ENCODE measurements at regions of chr5 and their contacts with region 1.

Region 1: DNA sequence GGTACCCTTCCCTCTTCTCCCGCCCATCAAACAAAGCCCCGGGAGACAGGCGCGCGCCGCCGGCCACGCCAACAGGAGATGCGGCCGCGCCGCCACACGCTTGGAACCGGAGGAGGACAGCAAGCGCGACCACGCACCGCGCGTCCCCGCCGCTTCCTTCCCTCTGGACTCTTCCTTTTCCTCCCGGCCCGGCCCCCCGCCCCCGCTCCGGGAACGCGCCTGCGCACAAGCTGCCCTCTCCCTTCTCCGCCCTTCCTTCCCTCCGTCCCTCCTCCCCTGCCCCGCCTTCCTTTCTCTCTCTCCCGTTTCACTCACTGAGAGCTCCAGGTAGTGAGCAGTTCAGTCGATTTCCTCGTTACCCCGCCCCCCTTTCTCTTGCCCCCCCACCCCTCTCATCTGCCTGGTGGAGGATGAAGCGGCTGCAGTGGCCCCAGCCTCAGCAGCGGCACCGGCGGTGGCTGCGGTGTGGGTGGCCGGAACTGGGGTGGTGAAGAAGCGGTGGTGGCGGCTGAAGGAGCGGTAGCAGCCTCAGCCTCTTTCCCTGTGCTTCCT is at the start of gene RASA1:
- DNase-seq: peak; percentile 87
- ATAC-seq: peak; percentile 90
- H3K4me3 ChIP-seq: peak within 1 kb of the TSS; percentile 90
- H3K27ac ChIP-seq: peak within 1 kb of the TSS; percentile 98
- H3K4me1 ChIP-seq: no peaks in the 10 kb centered on the region; the same call in 1 of the 2 replicates
- H3K27me3 ChIP-seq: no peaks in the 10 kb centered on the region
- CTCF ChIP-seq: no peak
- POLR2A ChIP-seq: peak; percentile 80
- RAD21 ChIP-seq: no peak
- total RNA-seq, gene RASA1: 45.7 and 55.8 TPM in 2 replicates

Region 2: DNA sequence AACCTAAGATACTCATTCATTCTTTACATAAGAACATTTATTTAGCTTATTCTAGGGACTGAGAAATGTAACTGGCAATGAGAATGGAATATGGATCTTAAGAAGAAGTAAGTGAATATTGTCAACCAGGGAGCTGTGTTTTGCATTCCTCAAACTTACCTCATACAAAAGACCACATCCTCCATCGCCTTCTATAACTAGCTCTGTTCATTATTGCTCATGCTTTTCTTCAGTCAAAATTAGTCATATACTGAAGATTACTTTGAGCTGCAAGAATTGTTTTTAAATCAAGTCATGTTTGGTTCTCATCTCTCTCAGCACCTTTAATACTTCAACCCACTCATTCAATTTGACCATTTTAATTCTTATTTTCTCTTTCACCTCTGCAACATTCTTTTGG is 140.2 kb before region 1 on chr5:
- CTCF ChIA-PET with region 1: no interaction called
- POLR2A ChIA-PET with region 1: no interaction called
- dilution Hi-C with region 1: no loop called
- in situ Hi-C with region 1: no loop called
- intact Hi-C with region 1: loop called (anchors 5 kb)
- DNase-seq: peak; percentile 89
- ATAC-seq: peak; percentile 80
- H3K4me3 ChIP-seq: no peak overlapping the region
- H3K27ac ChIP-seq: peak overlapping the region; percentile 39; the same call in 1 of the 2 replicates
- H3K4me1 ChIP-seq: peaks cover 7% of the 10 kb centered on the region; the same call in 1 of the 2 replicates
- H3K27me3 ChIP-seq: no peaks in the 10 kb centered on the region
- CTCF ChIP-seq: no peak
- POLR2A ChIP-seq: no peak
- RAD21 ChIP-seq: no peak

Region 3: GRCh38 chr5:87195104-87195591 is 72.5 kb before region 1 on chr5:
- CTCF ChIA-PET with region 1: no interaction called
- POLR2A ChIA-PET with region 1: no interaction called
- dilution Hi-C with region 1: no loop called
- in situ Hi-C with region 1: no loop called
- intact Hi-C with region 1: no loop called
- DNase-seq: peak; percentile 85
- ATAC-seq: peak; percentile 86
- H3K4me3 ChIP-seq: no peak overlapping the region
- H3K27ac ChIP-seq: peak overlapping the region; percentile 8; the same call in 1 of the 2 replicates
- H3K4me1 ChIP-seq: peaks cover 16% of the 10 kb centered on the region
- H3K27me3 ChIP-seq: no peaks in the 10 kb centered on the region
- CTCF ChIP-seq: no peak
- POLR2A ChIP-seq: no peak
- RAD21 ChIP-seq: no peak

Region 4: DNA sequence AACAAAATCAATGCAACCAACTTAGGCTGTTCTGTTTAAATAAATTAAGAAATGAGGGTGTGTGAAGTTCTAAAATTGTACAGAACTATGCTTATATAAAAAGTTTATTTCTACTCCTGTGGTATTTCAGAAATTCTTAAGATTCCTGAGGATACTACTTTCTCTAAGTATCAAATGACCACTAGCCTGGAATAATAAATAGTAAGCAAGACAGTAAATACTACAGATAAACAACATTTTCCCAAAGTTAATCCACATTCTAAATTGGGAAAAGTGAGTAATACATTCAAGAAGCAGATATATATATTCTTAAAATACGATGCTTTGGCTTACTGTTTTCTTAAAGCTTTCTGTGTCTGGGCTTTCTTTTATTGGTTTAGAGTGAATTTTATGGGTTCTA is 115.6 kb after region 1 on chr5:
- CTCF ChIA-PET with region 1: interaction called, 4 read pairs
- POLR2A ChIA-PET with region 1: interaction called, 4 read pairs
- dilution Hi-C with region 1: no loop called
- in situ Hi-C with region 1: no loop called
- intact Hi-C with region 1: loop called (anchors 1 kb)
- DNase-seq: peak; percentile 82
- ATAC-seq: peak; percentile 95
- H3K4me3 ChIP-seq: no peak overlapping the region
- H3K27ac ChIP-seq: no peak overlapping the region
- H3K4me1 ChIP-seq: peaks cover 5% of the 10 kb centered on the region
- H3K27me3 ChIP-seq: no peaks in the 10 kb centered on the region
- CTCF ChIP-seq: no peak
- POLR2A ChIP-seq: no peak
- RAD21 ChIP-seq: no peak

Measured in IMR-90 (cell line).